ENCODE measurements at regions of chr12 and their contacts with region 1.

Region 1: GRCh38 chr12:52362118-52362726 is 5.1 kb downstream of the KRT85 start:
- DNase-seq: peak; percentile 25
- H3K4me3 Mint-ChIP-seq: no peak overlapping the region
- H3K27ac Mint-ChIP-seq: no peak overlapping the region
- H3K4me1 Mint-ChIP-seq: peaks cover 12% of the 10 kb centered on the region
- H3K27me3 Mint-ChIP-seq: peaks cover 25% of the 10 kb centered on the region

Region 2: GRCh38 chr12:52372216-52373154 is 10.3 kb after region 1 on chr12:
- CTCF ChIA-PET with region 1: interaction called, 29 read pairs
- DNase-seq: peak; percentile 77
- H3K4me3 Mint-ChIP-seq: no peak overlapping the region
- H3K27ac Mint-ChIP-seq: no peak overlapping the region
- H3K4me1 Mint-ChIP-seq: no peaks in the 10 kb centered on the region
- H3K27me3 Mint-ChIP-seq: peaks cover 56% of the 10 kb centered on the region

Region 3: DNA sequence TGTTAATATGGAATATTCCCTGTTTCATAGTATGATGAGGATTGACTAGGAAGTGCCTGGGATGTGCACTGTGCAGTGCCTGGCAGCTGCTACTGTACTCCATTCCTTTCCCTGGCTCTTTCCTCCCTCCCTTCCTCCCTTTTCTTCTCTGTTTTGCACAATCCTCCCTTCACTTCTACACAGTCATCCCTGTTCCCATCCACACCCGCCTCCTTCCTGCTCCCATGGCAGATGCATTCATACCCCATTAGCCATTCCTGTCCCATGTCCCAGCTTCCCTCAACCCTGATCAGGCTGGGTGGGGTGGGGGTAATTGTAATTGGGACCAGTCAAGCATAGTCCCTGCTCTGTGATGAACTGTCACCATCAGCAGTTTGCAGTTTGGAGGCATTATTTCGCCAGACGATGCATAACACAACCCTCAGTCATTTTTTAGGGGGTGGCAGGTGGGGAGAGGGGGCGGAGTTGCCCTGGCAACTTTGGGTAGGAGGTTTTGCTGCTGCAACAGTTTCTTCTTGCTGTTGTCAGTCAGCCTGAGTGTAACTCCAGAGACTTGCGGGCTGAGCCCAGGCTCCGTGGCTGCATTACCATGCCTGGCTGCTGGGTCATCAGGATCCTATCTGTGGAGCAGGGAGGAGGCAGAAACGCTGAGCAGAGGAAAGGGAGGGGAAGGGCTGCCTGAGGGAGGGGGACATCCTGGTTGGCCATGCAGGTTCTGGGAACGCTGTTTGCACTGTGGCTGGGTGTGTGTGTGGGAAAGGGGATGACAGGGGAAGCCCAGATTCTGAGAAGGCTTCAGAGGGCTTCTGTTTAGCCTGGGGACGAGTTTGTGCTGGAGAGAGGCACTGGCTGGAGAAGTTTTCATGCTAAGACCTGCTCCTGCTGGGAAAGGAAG is 27.3 kb after region 1 on chr12:
- CTCF ChIA-PET with region 1: no interaction called
- DNase-seq: no peak
- H3K4me3 Mint-ChIP-seq: no peak overlapping the region
- H3K27ac Mint-ChIP-seq: no peak overlapping the region
- H3K4me1 Mint-ChIP-seq: no peaks in the 10 kb centered on the region
- H3K27me3 Mint-ChIP-seq: peaks cover 23% of the 10 kb centered on the region

Region 4: DNA sequence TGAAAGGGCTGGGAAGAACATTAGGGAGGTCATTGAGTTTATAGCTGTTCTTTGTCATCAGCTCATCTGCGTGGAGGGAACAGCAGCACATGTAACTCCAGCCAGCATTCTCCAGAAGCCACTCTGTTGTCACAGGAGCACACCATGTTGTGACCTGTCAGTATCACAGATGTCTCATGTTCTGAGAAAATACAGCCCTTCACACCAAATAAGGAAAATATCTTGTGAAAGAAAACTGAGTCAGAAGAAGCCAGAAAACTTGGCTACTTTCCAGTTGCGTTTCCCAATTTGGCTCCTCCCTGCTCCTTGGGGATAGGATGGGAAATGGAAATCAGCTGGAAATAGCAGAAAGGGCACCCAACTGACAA is 54.1 kb after region 1 on chr12:
- CTCF ChIA-PET with region 1: no interaction called
- DNase-seq: no peak
- H3K4me3 Mint-ChIP-seq: no peak overlapping the region
- H3K27ac Mint-ChIP-seq: no peak overlapping the region
- H3K4me1 Mint-ChIP-seq: no peaks in the 10 kb centered on the region
- H3K27me3 Mint-ChIP-seq: peaks cover 16% of the 10 kb centered on the region